Calu3 (cell line): ENCODE measurements at regions of chr19 and their contacts with region 1.

Region 1: GRCh38 chr19:48158210-48158790 is 11.8 kb downstream of the LIG1 start:
- DNase-seq: no peak
- H3K4me3 Mint-ChIP-seq: no peak overlapping the region
- H3K27ac Mint-ChIP-seq: no peak overlapping the region
- H3K4me1 Mint-ChIP-seq: no peaks in the 10 kb centered on the region
- H3K27me3 Mint-ChIP-seq: no peaks in the 10 kb centered on the region
- CTCF ChIP-seq: no peak

Region 2: DNA sequence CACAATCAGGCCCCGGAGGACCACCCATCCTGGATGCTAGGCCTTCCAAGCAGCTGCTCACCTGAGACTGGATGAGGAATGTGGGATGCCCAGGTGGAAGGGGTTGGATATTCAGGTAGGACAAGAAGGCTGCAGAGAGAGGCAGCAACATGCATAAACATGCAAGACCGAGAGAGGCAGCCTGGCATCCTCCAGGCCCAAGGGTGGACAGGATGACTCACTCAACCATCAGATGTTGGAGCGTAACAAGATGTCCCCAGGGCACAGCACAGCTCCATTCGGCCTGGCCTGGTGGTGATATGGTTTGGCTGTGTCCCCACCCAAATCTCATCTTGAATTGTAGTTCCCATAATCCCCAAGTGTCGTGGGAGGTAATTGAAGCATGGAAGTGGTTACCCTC is 104.4 kb before region 1 on chr19:
- CTCF ChIA-PET with region 1: no interaction called
- intact Hi-C with region 1: no loop called
- DNase-seq: no peak
- H3K4me3 Mint-ChIP-seq: no peak overlapping the region
- H3K27ac Mint-ChIP-seq: no peak overlapping the region
- H3K4me1 Mint-ChIP-seq: no peaks in the 10 kb centered on the region
- H3K27me3 Mint-ChIP-seq: peaks cover 64% of the 10 kb centered on the region
- CTCF ChIP-seq: no peak

Region 3: GRCh38 chr19:48147597-48148175 is 10.6 kb before region 1 on chr19:
- CTCF ChIA-PET with region 1: no interaction called
- intact Hi-C with region 1: no loop called
- DNase-seq: no peak
- H3K4me3 Mint-ChIP-seq: no peak overlapping the region
- H3K27ac Mint-ChIP-seq: no peak overlapping the region
- H3K4me1 Mint-ChIP-seq: no peaks in the 10 kb centered on the region
- H3K27me3 Mint-ChIP-seq: no peaks in the 10 kb centered on the region
- CTCF ChIP-seq: no peak

Region 4: DNA sequence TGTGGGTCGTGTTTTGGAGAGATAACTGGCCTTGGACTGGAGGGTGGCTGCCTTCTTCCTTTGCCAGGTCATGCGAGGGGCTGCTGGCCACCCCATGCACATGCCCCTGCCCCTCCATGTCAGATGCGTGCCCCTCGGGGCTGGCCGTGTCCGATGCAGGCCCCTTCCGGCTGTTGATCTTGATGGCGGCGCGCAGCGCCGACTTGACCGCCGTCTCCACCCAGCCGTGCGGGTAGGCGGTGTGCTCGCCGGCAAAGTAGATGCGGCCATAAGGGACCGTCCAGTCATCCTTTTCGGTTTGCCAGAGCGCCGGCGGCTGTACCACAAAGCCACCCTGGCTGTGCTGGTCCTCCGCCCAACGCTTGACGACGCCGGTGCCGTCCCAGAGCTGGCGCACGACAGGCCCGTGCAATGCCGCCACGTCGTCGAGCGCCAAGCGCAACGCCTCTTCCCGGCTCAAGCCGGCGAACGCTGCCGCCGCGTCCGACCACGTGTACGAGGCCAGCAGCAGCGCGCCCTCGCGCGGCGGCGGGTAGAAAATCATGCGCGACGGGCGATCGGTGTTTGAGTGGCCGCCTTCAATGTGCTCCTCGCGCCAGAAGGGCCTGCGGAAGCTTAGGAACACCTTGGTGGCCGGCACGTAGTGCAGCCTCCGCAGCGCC is 1731.5 kb after region 1 on chr19:
- CTCF ChIA-PET with region 1: interaction called, 10 read pairs
- intact Hi-C with region 1: no loop called
- DNase-seq: no peak
- H3K4me3 Mint-ChIP-seq: no peak overlapping the region
- H3K27ac Mint-ChIP-seq: no peak overlapping the region
- H3K4me1 Mint-ChIP-seq: no peaks in the 10 kb centered on the region
- H3K27me3 Mint-ChIP-seq: peaks cover 17% of the 10 kb centered on the region
- CTCF ChIP-seq: no peak